ENCODE measurements at regions of chr20 and their contacts with region 1.

Region 1: GRCh38 chr20:57596998-57597939 is 23.0 kb downstream of the ZBP1 start:
- DNase-seq: peak; percentile 82
- ATAC-seq: peak; percentile 85
- H3K4me3 Mint-ChIP-seq: peak overlapping the region; percentile 42
- H3K27ac Mint-ChIP-seq: no peak overlapping the region
- H3K4me1 Mint-ChIP-seq: peaks cover 25% of the 10 kb centered on the region
- H3K27me3 Mint-ChIP-seq: peaks cover 18% of the 10 kb centered on the region
- CTCF ChIP-seq: peak; percentile 35

Region 2: GRCh38 chr20:57383447-57384347 is 213.6 kb before region 1 on chr20:
- CTCF ChIA-PET with region 1: interaction called, 4 read pairs
- POLR2A ChIA-PET with region 1: no interaction called
- intact Hi-C with region 1: loop called (anchors 1 kb)
- DNase-seq: no peak
- ATAC-seq: no peak
- H3K4me3 Mint-ChIP-seq: no peak overlapping the region
- H3K27ac Mint-ChIP-seq: no peak overlapping the region
- H3K4me1 Mint-ChIP-seq: peaks cover 17% of the 10 kb centered on the region
- H3K27me3 Mint-ChIP-seq: no peaks in the 10 kb centered on the region
- CTCF ChIP-seq: no peak

Region 3: DNA sequence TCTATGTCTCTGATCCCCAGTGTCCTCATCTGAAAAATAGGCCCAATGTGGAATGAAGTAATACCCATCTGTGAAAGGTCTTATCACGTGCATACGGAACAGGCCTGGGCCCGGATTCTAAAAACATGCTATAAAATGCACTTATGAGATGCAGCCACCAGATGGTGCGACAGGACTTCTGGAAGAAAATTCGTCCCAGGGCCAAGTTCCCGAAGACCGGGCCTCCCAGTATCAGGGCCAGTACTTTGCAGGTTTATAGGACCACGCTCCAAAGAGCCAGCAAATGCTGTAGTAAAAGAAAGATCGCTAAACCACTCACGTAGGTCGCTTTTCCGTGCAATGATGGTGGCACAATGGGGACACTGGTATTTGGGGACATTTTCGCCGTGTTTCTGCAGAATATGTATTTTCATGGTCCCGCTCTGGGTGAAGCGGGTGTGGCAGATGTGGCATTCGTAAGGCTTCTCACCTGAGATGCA is 83.0 kb before region 1 on chr20:
- CTCF ChIA-PET with region 1: no interaction called
- POLR2A ChIA-PET with region 1: no interaction called
- intact Hi-C with region 1: loop called (anchors 1 kb)
- DNase-seq: no peak
- ATAC-seq: peak; percentile 31
- H3K4me3 Mint-ChIP-seq: no peak overlapping the region
- H3K27ac Mint-ChIP-seq: no peak overlapping the region
- H3K4me1 Mint-ChIP-seq: no peaks in the 10 kb centered on the region
- H3K27me3 Mint-ChIP-seq: peaks cover 7% of the 10 kb centered on the region
- CTCF ChIP-seq: no peak

Region 4: GRCh38 chr20:58028123-58028522 is 430.9 kb after region 1 on chr20:
- CTCF ChIA-PET with region 1: no interaction called
- POLR2A ChIA-PET with region 1: no interaction called
- intact Hi-C with region 1: loop called (anchors 1 kb)
- DNase-seq: no peak
- ATAC-seq: no peak
- H3K4me3 Mint-ChIP-seq: no peak overlapping the region
- H3K27ac Mint-ChIP-seq: no peak overlapping the region
- H3K4me1 Mint-ChIP-seq: no peaks in the 10 kb centered on the region
- H3K27me3 Mint-ChIP-seq: peaks cover 27% of the 10 kb centered on the region
- CTCF ChIP-seq: no peak

Region 5: DNA sequence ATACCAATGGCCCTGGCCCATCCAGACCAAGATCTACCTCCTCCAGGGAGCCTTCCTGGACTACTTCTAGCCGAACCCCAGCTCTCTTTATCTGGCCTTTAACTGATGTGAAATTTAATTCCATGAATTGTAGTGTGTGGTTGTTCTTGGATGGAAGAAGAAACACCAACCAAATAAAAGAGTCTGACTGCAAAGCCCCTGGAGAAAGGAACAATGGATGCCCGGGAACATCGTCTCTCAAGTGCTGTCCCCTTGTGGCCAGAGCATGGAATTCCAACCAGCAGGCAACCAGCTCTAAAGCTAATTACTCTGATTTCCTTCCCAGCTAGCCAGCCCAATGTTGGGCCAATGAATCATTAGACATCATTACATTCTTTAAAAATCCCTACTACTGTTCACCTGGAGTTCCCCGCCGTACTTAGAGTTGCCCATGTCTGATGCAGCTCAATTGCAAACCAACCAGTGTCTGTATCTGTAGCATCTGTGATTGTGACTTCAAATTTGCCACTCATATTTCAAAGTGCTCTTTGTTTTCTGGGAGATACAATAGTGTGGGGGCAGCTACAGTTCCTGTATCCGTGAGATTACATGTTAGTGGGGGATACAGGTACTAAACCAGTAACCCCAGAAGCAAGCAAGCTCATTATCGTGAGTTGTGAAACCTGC is 490.1 kb after region 1 on chr20:
- CTCF ChIA-PET with region 1: interaction called, 21 read pairs
- POLR2A ChIA-PET with region 1: no interaction called
- intact Hi-C with region 1: loop called (anchors 1 kb)
- DNase-seq: no peak
- ATAC-seq: no peak
- H3K4me3 Mint-ChIP-seq: no peak overlapping the region
- H3K27ac Mint-ChIP-seq: no peak overlapping the region
- H3K4me1 Mint-ChIP-seq: no peaks in the 10 kb centered on the region
- H3K27me3 Mint-ChIP-seq: peaks cover 16% of the 10 kb centered on the region
- CTCF ChIP-seq: no peak

Region 6: DNA sequence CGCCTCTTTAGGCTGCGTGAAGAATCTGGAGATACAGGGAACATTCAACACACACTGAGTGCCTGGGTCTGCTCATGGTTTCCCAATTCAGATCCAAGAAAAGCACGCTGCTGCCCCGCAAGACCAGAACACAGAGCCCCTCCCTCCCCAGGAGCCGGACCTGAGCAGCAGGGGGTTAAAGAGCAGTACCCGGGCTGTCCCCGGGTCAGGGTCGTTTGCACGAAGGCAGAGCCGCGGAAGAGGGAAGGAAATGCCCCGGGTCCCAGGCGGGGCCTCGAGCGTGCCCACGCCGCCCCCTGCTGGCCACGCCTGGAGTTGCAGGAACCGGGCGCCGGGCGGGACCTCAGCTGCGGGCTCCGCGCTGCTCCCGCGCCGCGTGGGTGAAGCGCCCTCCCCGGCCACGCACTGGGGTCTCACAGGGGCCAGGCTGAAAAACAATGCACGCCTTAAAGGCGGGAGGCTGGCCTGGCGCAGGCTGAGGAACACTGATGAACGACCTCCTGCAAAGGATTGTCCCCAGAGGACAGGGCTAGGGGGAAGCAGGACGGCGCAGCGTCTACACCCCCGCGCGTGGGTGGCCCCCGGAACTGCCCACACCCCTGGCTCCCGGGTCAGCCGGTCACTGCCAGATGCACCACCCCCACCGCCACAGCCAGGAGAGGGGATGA is 582.3 kb after region 1 on chr20:
- CTCF ChIA-PET with region 1: interaction called, 60 read pairs
- POLR2A ChIA-PET with region 1: no interaction called
- intact Hi-C with region 1: loop called (anchors 1 kb)
- DNase-seq: peak; percentile 75
- ATAC-seq: peak; percentile 96
- H3K4me3 Mint-ChIP-seq: no peak overlapping the region
- H3K27ac Mint-ChIP-seq: no peak overlapping the region
- H3K4me1 Mint-ChIP-seq: peaks cover 9% of the 10 kb centered on the region
- H3K27me3 Mint-ChIP-seq: peaks cover 36% of the 10 kb centered on the region
- CTCF ChIP-seq: peak; percentile 94

Measured in activated B cell treated with CpG ODN at 0.5 μM for 24 hours (primary cell).